ENCODE measurements at regions of chr12 and their contacts with region 1.

Region 1: GRCh38 chr12:118372541-118373495 is at the start of gene TAOK3:
- DNase-seq: peak; percentile 99
- ATAC-seq: peak; percentile 84
- H3K4me3 ChIP-seq: peak within 1 kb of the TSS; percentile 96
- H3K27ac ChIP-seq: peak within 1 kb of the TSS; percentile 47
- H3K4me1 ChIP-seq: peaks cover 29% of the 10 kb centered on the region
- H3K27me3 ChIP-seq: no peaks in the 10 kb centered on the region
- CTCF ChIP-seq: no peak
- total RNA-seq, gene TAOK3: 15.9 and 27.9 TPM in 2 replicates

Region 2: GRCh38 chr12:117587631-117588287 is 785.1 kb before region 1 on chr12:
- CTCF ChIA-PET with region 1: no interaction called
- POLR2A ChIA-PET with region 1: no interaction called
- intact Hi-C with region 1: no loop called
- DNase-seq: peak; percentile 76
- ATAC-seq: peak; percentile 90
- H3K4me3 ChIP-seq: no peak overlapping the region
- H3K27ac ChIP-seq: no peak overlapping the region
- H3K4me1 ChIP-seq: no peaks in the 10 kb centered on the region
- H3K27me3 ChIP-seq: no peaks in the 10 kb centered on the region
- CTCF ChIP-seq: peak; percentile 92

Region 3: DNA sequence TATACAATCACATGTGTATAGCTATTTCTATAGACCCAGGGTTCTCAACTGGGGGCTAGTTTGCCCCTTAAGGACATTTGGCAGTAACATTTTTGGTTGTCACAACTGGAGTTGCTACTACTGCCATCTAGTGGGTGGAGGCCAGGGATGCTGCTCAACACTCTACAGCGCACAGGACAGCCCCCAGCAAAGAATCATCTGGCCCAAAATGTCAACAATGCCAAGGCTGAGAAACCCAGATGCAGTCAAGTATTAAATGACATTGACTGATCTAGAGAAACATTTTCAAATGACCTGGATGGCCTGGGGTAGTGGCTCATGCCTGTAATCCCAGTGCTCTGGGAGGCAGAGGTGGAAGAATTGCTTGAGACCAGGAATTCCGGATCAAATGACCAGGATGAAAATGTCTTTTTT is 317.7 kb before region 1 on chr12:
- CTCF ChIA-PET with region 1: no interaction called
- POLR2A ChIA-PET with region 1: no interaction called
- intact Hi-C with region 1: loop called (anchors 5 kb)
- DNase-seq: peak; percentile 78
- ATAC-seq: no peak
- H3K4me3 ChIP-seq: no peak overlapping the region
- H3K27ac ChIP-seq: no peak overlapping the region
- H3K4me1 ChIP-seq: peaks cover 64% of the 10 kb centered on the region
- H3K27me3 ChIP-seq: no peaks in the 10 kb centered on the region
- CTCF ChIP-seq: peak; percentile 91

Region 4: DNA sequence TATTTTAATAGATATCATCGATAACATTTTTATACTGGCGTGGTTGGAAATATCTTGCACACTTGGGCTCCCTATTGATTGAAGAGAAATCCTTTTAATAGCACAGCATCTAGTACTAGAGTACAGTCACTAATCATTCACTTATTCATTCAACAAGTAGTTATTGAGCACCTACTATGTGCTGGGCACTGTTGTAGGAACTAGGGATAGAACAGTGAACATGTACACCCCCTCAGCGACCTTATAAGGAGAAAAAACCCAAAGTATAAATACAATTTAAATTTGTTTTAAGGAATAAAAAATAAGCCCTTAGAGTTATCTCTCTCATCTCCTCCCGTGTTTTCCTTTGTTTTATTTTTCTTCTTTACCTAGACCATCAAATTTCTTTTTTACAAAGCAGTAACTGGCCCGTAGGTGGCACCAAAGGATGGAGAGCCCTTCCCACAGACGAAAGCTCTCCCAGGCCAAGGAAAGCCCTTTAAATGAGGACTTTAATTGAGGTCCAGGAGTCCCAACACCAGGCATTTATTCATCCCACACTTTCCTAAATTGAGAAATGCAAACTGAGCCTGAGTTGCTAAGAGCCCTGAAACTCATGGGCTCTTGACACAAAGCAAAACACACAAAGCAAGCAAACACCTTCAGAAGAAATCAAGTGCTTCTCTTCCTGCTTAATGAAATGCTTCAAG is 207.9 kb before region 1 on chr12:
- CTCF ChIA-PET with region 1: no interaction called
- POLR2A ChIA-PET with region 1: no interaction called
- intact Hi-C with region 1: loop called (anchors 1 kb)
- DNase-seq: peak; percentile 65
- ATAC-seq: peak; percentile 78
- H3K4me3 ChIP-seq: no peak overlapping the region
- H3K27ac ChIP-seq: no peak overlapping the region
- H3K4me1 ChIP-seq: no peaks in the 10 kb centered on the region
- H3K27me3 ChIP-seq: no peaks in the 10 kb centered on the region
- CTCF ChIP-seq: peak; percentile 89

Region 5: DNA sequence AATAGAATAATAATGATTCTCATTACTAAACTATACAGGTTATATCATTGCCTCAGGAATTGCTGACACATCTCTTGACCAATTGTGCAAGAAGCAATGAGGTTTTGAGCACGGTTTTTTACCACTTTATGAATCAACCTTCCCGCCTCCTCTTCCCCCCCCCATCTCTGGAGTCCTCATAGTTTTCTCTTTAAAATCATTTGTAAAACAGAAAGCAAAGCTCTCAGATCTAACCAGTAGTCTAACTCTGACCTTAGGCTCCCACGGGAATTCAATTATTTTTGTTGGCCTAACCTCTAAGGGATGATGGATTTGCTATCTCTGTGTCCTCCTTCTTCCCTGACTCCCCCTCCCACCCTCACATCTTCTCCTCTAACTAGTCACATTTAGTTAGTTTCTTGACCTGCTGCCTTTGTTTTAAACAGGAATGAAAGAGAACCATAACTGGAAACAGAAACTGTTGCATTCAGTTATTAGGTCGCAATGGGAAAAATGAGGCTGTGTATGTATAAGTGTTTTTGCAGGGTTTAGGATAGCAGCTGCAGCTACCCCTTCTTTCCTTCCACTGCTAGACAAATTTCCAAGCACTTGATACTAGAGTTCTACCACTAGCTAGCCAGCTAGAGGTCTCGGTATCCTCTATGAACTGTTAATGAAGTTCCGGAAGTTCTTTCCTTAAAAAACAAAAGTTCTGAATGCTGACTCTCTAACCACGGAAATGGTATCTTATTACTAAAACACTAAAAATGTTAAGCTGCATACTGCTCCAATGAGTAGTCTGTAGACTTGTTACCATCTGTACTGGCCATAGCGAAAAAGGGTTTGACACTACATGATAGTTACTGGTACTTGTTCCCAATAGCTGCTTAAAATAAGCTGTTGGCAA is 65.5 kb before region 1 on chr12:
- CTCF ChIA-PET with region 1: interaction called, 8 read pairs
- POLR2A ChIA-PET with region 1: interaction called, 8 read pairs
- intact Hi-C with region 1: loop called (anchors 1 kb)
- DNase-seq: peak; percentile 92
- ATAC-seq: peak; percentile 93
- H3K4me3 ChIP-seq: peak overlapping the region; percentile 46
- H3K27ac ChIP-seq: peak overlapping the region; percentile 65
- H3K4me1 ChIP-seq: peaks cover 46% of the 10 kb centered on the region
- H3K27me3 ChIP-seq: no peaks in the 10 kb centered on the region
- CTCF ChIP-seq: no peak

Measured in PC-3 (cell line).